H1 (cell line): ENCODE measurements at regions of chr11 and their contacts with region 1.

Region 1: DNA sequence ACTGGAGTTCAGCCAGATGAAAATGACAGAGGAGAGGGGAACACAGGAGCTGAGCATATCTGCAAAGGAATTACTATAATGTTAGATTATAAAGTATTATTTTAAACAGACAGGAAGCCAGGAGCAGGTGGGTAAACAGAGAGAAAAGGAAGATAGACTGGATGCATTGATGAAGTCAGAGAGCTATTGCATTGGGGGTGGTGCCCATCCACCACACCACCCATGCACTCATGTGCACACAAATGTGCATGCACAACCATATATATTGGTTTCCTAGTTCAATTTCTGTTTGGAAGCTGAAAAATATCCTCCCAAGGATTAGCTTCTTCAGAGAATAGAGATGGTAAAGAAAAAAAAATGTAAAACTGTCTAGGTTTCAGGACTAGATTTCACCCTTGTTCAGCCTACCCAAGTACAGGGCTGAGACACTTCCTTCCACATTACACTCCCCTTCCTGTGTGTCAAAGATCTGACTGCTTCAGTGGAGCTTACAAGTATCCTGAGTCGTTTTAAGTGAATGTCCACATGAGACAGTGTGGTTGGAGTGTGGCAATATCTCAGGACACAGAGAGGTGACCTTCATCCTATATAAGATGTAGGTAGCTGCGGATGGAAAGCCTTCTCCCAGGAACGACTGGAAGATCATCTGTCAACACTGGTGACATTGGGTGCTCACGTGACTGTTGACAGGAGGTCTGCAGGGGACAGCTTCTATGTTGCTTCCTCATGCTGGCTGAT is 12.2 kb upstream of the SMPD1 start:
- DNase-seq: no peak
- H3K4me3 ChIP-seq: no peak overlapping the region
- H3K27ac ChIP-seq: no peak overlapping the region
- H3K4me1 ChIP-seq: peaks cover 0 to 9% (median 7%) of the 10 kb centered on the region in 4 experiments; a peak in 4 of 7 replicates
- H3K27me3 ChIP-seq: no peaks in the 10 kb centered on the region
- CTCF ChIP-seq: no peak
- EP300 ChIP-seq: no peak
- POLR2A ChIP-seq: no peak
- RAD21 ChIP-seq: no peak

Region 2: DNA sequence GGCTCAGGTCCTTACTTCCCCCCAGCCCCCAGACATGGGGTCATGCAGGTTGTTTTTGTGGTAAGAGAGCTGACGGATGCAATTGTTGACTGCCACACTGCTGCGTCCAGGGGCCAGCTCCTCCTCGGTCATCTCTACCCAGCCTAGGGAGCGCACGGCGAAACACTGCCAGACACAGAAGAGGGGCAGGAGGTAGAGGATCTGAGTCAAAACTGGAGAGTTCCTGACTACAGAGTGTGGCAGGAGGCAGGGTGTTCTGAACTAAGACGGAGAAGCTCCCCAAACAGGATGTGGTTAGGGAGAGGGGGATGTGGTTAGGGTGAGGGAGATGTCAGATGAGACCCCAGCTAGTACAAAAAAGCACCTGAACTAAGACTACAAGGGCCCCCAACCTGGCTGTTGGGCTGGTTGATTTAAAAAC is 24.5 kb after region 1 on chr11:
- CTCF ChIA-PET with region 1: interaction called, 19 read pairs
- POLR2A ChIA-PET with region 1: no interaction called
- DNase-seq: no peak
- H3K4me3 ChIP-seq: no peak overlapping the region
- H3K27ac ChIP-seq: no peak overlapping the region
- H3K4me1 ChIP-seq: peaks cover 8 to 15% (median 10%) of the 10 kb centered on the region in 4 experiments
- H3K27me3 ChIP-seq: no peaks in the 10 kb centered on the region
- CTCF ChIP-seq: no peak
- EP300 ChIP-seq: no peak
- POLR2A ChIP-seq: no peak
- RAD21 ChIP-seq: no peak

Region 3: DNA sequence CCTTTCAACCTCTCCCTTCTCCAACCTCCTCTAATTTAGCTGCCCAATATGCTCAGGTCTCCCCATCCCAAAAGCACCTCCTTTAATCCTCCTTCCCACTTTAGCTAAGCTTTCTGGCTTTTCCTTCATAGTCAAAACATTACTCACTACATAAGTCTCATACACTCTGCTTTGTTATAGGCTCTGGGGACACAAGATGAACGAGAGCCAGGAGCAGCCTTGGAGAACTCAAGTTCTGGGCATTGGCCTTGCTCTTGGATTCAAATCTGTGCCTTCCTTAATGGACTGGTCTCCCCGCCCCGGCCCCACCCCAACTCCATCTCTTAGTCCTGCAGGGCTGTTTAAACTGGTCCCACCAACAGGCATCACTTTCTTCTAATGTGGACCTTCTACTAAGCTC is 74.1 kb after region 1 on chr11:
- CTCF ChIA-PET with region 1: interaction called, 585 read pairs
- POLR2A ChIA-PET with region 1: interaction called, 3 read pairs
- DNase-seq: no peak
- H3K4me3 ChIP-seq: no peak overlapping the region
- H3K27ac ChIP-seq: no peak overlapping the region
- H3K4me1 ChIP-seq: no peaks in the 10 kb centered on the region
- H3K27me3 ChIP-seq: no peaks in the 10 kb centered on the region
- CTCF ChIP-seq: no peak
- EP300 ChIP-seq: no peak
- POLR2A ChIP-seq: no peak
- RAD21 ChIP-seq: no peak

Region 4: DNA sequence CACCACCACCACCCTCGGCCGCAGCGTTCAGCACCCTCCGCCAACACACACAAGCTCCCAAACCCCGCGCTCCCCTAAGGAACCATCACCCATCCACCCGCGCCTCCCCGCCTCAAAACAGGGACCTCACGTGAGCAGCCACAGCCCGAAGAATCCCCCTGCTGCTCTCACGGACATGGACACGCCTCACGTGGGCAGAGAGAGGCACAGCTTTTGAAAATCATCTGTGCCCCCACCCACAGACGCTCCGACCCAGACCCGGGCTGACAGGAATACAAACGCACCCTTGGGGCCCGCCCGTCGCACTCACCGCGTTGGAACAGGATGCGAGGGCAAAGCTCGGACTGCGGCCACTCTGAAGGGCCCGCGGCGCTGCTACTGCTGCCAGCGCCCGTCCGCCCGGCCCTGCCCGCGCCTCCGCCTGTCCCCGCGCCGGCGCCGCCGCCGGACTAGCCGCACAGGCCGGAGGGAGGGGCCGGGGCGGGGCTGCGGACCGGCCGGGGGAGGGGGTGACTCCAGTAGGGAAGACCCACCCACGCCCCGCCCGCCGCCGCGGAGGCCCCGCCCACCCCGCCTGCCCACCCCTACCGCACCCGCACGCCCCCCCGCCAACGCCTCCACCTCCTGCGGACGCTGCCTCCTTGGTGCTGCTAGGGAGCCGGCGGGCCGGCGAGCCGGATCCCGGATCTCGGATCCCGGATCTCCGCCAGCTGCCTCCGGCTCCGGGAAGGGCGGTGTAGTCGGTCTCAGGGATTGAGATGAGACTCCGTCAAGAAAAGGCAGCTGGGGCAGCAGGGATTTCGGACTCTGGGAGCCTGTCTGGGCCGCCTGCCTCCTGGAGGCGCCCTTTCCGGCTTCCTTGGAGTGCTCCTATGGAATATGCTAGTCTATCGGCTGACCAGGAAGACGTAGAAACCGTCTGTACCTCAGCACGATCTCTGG is 95.7 kb after region 1 on chr11 and contains the start of gene TRIM3:
- CTCF ChIA-PET with region 1: interaction called, 46 read pairs
- POLR2A ChIA-PET with region 1: interaction called, 6 read pairs
- DNase-seq: peak; percentile 46 to 88
- H3K4me3 ChIP-seq: peak within 1 kb of the TSS; percentile 73 to 97 (median 80)
- H3K27ac ChIP-seq: no peak within 1 kb of the TSS; the same call in 1 of the 2 replicates
- H3K4me1 ChIP-seq: peaks cover 9 to 20% (median 15%) of the 10 kb centered on the region in 4 experiments
- H3K27me3 ChIP-seq: no peaks in the 10 kb centered on the region; a peak in 1 of 7 replicates
- CTCF ChIP-seq: peak; percentile 9 to 19 (median 19); a peak in 3 of 4 replicates
- EP300 ChIP-seq: 0 out of 3 replicates have a peak, but pooled peaks of 1 of the 2 experiments have one; percentile 6
- POLR2A ChIP-seq: 0 out of 3 replicates have a peak, but pooled peaks of 1 of the 2 experiments have one; percentile 21
- RAD21 ChIP-seq: no peak; a peak in 1 of 4 replicates
- total RNA-seq, gene TRIM3: 14.3 and 15.7 TPM in 2 replicates

Region 5: DNA sequence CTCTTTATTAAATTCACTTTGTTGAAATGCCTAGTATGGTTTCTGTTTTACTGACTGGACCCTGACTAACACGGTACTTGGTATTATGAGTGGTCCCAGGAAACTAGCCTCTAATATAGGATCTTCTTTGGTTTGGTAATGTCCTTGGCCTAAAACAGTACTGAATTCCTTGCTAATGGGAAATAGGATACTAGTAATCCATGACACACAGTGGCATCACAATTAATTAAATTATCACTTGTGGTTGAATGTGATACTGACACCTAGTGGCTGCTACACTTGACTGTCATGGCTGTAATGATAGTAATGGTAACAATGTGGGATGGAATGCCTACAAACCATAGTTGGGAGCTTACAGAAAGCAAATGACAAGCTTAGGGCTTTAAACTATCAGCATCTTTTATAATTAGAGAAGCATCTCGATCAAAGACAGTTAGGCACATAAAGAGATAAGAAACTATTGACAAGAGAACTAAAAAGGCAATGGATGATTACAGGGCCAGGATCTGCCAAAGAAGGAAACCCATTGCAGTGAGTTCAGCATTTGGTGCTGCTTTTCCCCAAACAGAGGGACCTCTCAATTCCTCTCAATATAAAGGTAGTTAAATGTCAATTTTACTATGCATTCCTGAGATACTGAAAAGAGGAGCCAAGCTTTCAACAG is 127.6 kb after region 1 on chr11:
- CTCF ChIA-PET with region 1: interaction called, 107 read pairs
- POLR2A ChIA-PET with region 1: no interaction called
- DNase-seq: no peak
- H3K4me3 ChIP-seq: no peak overlapping the region
- H3K27ac ChIP-seq: no peak overlapping the region
- H3K4me1 ChIP-seq: no peaks in the 10 kb centered on the region
- H3K27me3 ChIP-seq: no peaks in the 10 kb centered on the region
- CTCF ChIP-seq: peak in 2 of 3 experiments; percentile 46 to 86; a peak in 2 of 4 replicates
- EP300 ChIP-seq: no peak
- POLR2A ChIP-seq: no peak
- RAD21 ChIP-seq: peak; percentile 51 to 63